Natural killer cell (primary cell): ENCODE measurements at regions of chrX and their contacts with region 1.

Region 1: DNA sequence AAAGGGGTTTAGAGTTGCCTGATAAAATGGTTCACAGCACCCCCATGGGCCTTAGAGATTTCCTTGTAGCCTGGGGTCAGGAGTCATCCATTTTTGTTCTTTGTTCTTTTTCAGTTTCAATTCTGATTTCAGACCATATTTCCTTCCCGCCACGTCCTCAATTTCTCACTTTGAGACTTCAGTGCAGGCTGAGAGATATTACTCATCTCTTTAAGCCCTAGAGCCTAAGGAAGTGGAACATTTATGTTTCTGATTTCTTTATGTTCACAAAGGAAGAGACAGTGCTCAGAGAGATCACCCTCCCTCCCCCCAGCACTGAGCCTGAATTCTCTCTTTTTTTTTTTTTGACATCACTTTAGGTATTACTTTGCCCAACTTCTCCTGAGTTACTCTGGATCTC is 56.3 kb downstream of the MSN start:
- DNase-seq: peak in 1 of 2 donors; percentile 73
- ATAC-seq: peak; percentile 69 to 80 (median 77)
- H3K4me3 ChIP-seq: no peak overlapping the region
- H3K4me3 Mint-ChIP-seq: peak overlapping the region; percentile 80
- H3K27ac ChIP-seq: peak overlapping the region; percentile 82
- H3K27ac Mint-ChIP-seq: peak overlapping the region; percentile 76 to 79
- H3K4me1 ChIP-seq: peaks cover 59% of the 10 kb centered on the region
- H3K4me1 Mint-ChIP-seq: peaks cover 86 to 90% of the 10 kb centered on the region in 2 donors
- H3K27me3 ChIP-seq: no peaks in the 10 kb centered on the region
- H3K27me3 Mint-ChIP-seq: no peaks in the 10 kb centered on the region
- CTCF ChIP-seq: no peak

Region 2: GRCh38 chrX:65502618-65503017 is 221.1 kb before region 1 on chrX:
- intact Hi-C with region 1: no loop called
- DNase-seq: no peak
- ATAC-seq: no peak
- H3K4me3 ChIP-seq: no peak overlapping the region
- H3K4me3 Mint-ChIP-seq: no peak overlapping the region
- H3K27ac ChIP-seq: no peak overlapping the region
- H3K27ac Mint-ChIP-seq: no peak overlapping the region
- H3K4me1 ChIP-seq: no peaks in the 10 kb centered on the region
- H3K4me1 Mint-ChIP-seq: no peaks in the 10 kb centered on the region
- H3K27me3 ChIP-seq: no peaks in the 10 kb centered on the region
- H3K27me3 Mint-ChIP-seq: no peaks in the 10 kb centered on the region
- CTCF ChIP-seq: no peak

Region 3: DNA sequence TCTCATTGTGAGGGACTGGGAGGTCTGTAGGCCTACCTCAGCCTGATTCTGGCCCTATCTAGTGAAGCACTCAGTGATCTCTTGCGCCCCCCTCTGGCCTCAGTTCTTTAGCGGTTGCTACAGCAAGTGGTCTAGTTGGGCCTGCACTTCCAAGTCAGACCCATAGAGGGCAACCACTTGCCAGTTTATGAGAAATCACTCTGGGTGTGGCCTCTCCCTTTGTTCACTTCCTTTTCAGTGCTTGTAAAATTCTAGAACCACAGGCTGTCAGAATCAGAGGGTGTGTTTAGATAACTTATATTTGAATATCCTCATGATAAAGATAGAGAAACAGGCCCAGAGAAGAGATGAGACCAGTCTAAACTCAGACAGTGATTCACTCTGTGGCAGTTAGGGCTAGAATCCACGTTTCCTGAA is 128.2 kb before region 1 on chrX:
- intact Hi-C with region 1: loop called (anchors 1 kb)
- DNase-seq: peak; percentile 82 to 94
- ATAC-seq: peak; percentile 80 to 97 (median 88)
- H3K4me3 ChIP-seq: no peak overlapping the region
- H3K4me3 Mint-ChIP-seq: peak overlapping the region; percentile 77
- H3K27ac ChIP-seq: peak overlapping the region; percentile 97
- H3K27ac Mint-ChIP-seq: peak overlapping the region; percentile 83 to 85
- H3K4me1 ChIP-seq: peaks cover 47% of the 10 kb centered on the region
- H3K4me1 Mint-ChIP-seq: peaks cover 37 to 48% of the 10 kb centered on the region in 2 donors
- H3K27me3 ChIP-seq: no peaks in the 10 kb centered on the region
- H3K27me3 Mint-ChIP-seq: no peaks in the 10 kb centered on the region
- CTCF ChIP-seq: peak; percentile 86

Region 4: GRCh38 chrX:65674204-65674893 is 49.4 kb before region 1 on chrX:
- intact Hi-C with region 1: loop called (anchors 5 kb)
- DNase-seq: peak in 1 of 2 donors; percentile 57
- ATAC-seq: peak; percentile 54 to 61 (median 60)
- H3K4me3 ChIP-seq: peak overlapping the region; percentile 1
- H3K4me3 Mint-ChIP-seq: peak overlapping the region; percentile 86
- H3K27ac ChIP-seq: peak overlapping the region; percentile 61
- H3K27ac Mint-ChIP-seq: peak overlapping the region; percentile 94 to 97
- H3K4me1 ChIP-seq: peaks cover 64% of the 10 kb centered on the region
- H3K4me1 Mint-ChIP-seq: peaks cover 83 to 86% of the 10 kb centered on the region in 2 donors
- H3K27me3 ChIP-seq: no peaks in the 10 kb centered on the region
- H3K27me3 Mint-ChIP-seq: no peaks in the 10 kb centered on the region
- CTCF ChIP-seq: no peak

Region 5: DNA sequence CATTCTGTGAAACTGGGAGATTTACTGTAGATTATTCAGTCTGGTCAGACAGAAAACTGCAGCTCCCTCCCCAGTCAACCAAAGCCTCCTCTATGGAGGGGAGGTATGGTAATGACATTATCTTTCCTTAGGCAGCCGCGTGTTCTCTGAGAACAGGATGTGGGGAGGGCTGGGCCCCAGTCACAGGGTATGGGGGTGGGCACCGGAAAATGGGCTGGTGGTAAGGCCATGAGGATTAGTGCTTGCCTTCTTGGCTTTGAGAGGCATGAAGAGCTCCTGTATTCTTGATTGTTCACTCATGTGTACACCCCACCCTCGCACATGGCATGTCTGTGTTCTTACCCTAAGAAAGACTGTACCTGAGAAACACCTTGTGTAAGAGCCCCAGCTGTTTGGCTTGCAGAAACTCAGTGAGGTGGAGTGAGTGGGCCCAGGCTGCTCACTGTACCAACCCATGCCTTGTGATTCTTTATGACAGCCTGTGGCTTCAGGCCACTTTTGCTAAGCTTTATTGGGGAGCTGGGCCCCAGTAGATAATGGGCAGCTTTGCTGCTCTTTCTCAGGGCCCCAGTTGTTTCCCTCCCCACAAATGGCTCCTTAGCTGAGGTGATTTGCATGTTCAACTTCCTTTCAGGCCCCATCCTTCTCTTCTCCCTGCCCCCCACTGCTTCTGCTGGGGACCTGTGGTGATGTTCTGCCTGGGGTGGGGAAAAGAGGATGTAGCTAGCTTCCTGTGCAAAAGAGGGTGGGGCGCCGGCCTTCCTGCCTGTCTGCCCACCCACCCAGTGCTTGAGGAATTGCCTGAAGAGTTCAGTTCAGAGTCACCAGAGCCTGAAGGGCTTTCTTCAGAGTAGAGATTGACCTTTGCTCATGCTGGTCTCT is 25.6 kb before region 1 on chrX:
- intact Hi-C with region 1: loop called (anchors 2 kb)
- DNase-seq: peak; percentile 49 to 79
- ATAC-seq: peak; percentile 59 to 80 (median 68)
- H3K4me3 ChIP-seq: peak overlapping the region; percentile 3
- H3K4me3 Mint-ChIP-seq: peak overlapping the region; percentile 81
- H3K27ac ChIP-seq: peak overlapping the region; percentile 85
- H3K27ac Mint-ChIP-seq: peak overlapping the region; percentile 86 to 98
- H3K4me1 ChIP-seq: peaks cover 85% of the 10 kb centered on the region
- H3K4me1 Mint-ChIP-seq: peaks cover 83 to 96% of the 10 kb centered on the region in 2 donors
- H3K27me3 ChIP-seq: no peaks in the 10 kb centered on the region
- H3K27me3 Mint-ChIP-seq: no peaks in the 10 kb centered on the region
- CTCF ChIP-seq: no peak

Region 6: GRCh38 chrX:65706041-65706828 is 17.5 kb before region 1 on chrX:
- intact Hi-C with region 1: loop called (anchors 2 kb)
- DNase-seq: peak; percentile 47 to 66
- ATAC-seq: peak; percentile 79 to 89 (median 83)
- H3K4me3 ChIP-seq: no peak overlapping the region
- H3K4me3 Mint-ChIP-seq: peak overlapping the region; percentile 72
- H3K27ac ChIP-seq: peak overlapping the region; percentile 90
- H3K27ac Mint-ChIP-seq: peak overlapping the region; percentile 86 to 98
- H3K4me1 ChIP-seq: peaks cover 77% of the 10 kb centered on the region
- H3K4me1 Mint-ChIP-seq: peaks cover 57 to 70% of the 10 kb centered on the region in 2 donors
- H3K27me3 ChIP-seq: no peaks in the 10 kb centered on the region
- H3K27me3 Mint-ChIP-seq: no peaks in the 10 kb centered on the region
- CTCF ChIP-seq: no peak

Region 7: GRCh38 chrX:65745992-65746391 is 22.3 kb after region 1 on chrX:
- intact Hi-C with region 1: no loop called
- DNase-seq: no peak
- ATAC-seq: no peak
- H3K4me3 ChIP-seq: no peak overlapping the region
- H3K4me3 Mint-ChIP-seq: no peak overlapping the region
- H3K27ac ChIP-seq: peak overlapping the region; percentile 25
- H3K27ac Mint-ChIP-seq: peak overlapping the region; percentile 21 to 84
- H3K4me1 ChIP-seq: peaks cover 9% of the 10 kb centered on the region
- H3K4me1 Mint-ChIP-seq: peaks cover 51 to 63% of the 10 kb centered on the region in 2 donors
- H3K27me3 ChIP-seq: no peaks in the 10 kb centered on the region
- H3K27me3 Mint-ChIP-seq: no peaks in the 10 kb centered on the region
- CTCF ChIP-seq: no peak

Region 8: GRCh38 chrX:66046612-66047235 is 323.0 kb after region 1 on chrX:
- intact Hi-C with region 1: loop called (anchors 10 kb)
- DNase-seq: peak in 1 of 2 donors; percentile 38
- ATAC-seq: peak; percentile 69 to 90 (median 82)
- H3K4me3 ChIP-seq: no peak overlapping the region
- H3K4me3 Mint-ChIP-seq: peak overlapping the region; percentile 53
- H3K27ac ChIP-seq: peak overlapping the region; percentile 86
- H3K27ac Mint-ChIP-seq: peak overlapping the region in 1 of 2 donors; percentile 95
- H3K4me1 ChIP-seq: peaks cover 15% of the 10 kb centered on the region
- H3K4me1 Mint-ChIP-seq: peaks cover 39 to 42% of the 10 kb centered on the region in 2 donors
- H3K27me3 ChIP-seq: no peaks in the 10 kb centered on the region
- H3K27me3 Mint-ChIP-seq: no peaks in the 10 kb centered on the region
- CTCF ChIP-seq: no peak